ENCODE measurements at regions of chr5 and their contacts with region 1.

Region 1: GRCh38 chr5:132813599-132814502 is 749 bp downstream of the SOWAHA start:
- DNase-seq: peak; percentile 51
- CTCF ChIP-seq: no peak

Region 2: GRCh38 chr5:132526290-132526973 is 287.4 kb before region 1 on chr5:
- in situ Hi-C with region 1: loop called (anchors 10 kb)
- DNase-seq: peak; percentile 50
- CTCF ChIP-seq: peak; percentile 52